Mammary epithelial cell (primary cell): ENCODE measurements at regions of chr16 and their contacts with region 1.

Region 1: GRCh38 chr16:65658349-65658748 is 536.5 kb upstream of the CDH11 start:
- DNase-seq: peak; percentile 95
- H3K4me3 ChIP-seq: no peak overlapping the region
- H3K27ac ChIP-seq: peak overlapping the region; percentile 69
- H3K4me1 ChIP-seq: peaks cover 38% of the 10 kb centered on the region
- H3K27me3 ChIP-seq: no peaks in the 10 kb centered on the region
- CTCF ChIP-seq: no peak

Region 2: DNA sequence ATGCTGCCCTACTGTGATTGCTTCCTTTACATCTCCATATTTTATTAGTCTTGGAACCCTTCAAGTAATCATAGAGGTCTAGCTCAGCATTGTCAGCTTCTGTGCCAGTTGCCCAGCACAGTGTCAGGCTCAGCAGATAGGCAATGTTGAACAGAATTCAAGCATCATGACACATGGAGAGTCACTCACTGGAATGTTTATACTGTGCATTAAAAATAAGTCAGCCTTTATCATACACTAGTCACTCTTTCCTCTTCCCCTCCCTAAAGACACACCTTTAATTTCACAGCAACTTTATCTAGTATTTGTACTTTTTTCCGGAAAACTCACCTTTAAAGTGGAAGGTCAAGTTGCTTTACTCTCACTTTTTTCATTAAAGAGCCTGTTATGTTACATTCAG is 282.7 kb before region 1 on chr16:
- CTCF ChIA-PET with region 1: no interaction called
- dilution Hi-C with region 1: no loop called
- in situ Hi-C with region 1: no loop called
- intact Hi-C with region 1: loop called (anchors 2 kb)
- DNase-seq: peak; percentile 59
- H3K4me3 ChIP-seq: no peak overlapping the region
- H3K27ac ChIP-seq: no peak overlapping the region
- H3K4me1 ChIP-seq: peaks cover 26% of the 10 kb centered on the region
- H3K27me3 ChIP-seq: no peaks in the 10 kb centered on the region
- CTCF ChIP-seq: no peak

Region 3: GRCh38 chr16:65769055-65769465 is 110.7 kb after region 1 on chr16:
- CTCF ChIA-PET with region 1: no interaction called
- dilution Hi-C with region 1: no loop called
- in situ Hi-C with region 1: no loop called
- intact Hi-C with region 1: no loop called
- DNase-seq: peak; percentile 50
- H3K4me3 ChIP-seq: no peak overlapping the region
- H3K27ac ChIP-seq: no peak overlapping the region
- H3K4me1 ChIP-seq: peaks cover 7% of the 10 kb centered on the region
- H3K27me3 ChIP-seq: no peaks in the 10 kb centered on the region
- CTCF ChIP-seq: no peak

Region 4: GRCh38 chr16:65884018-65884417 is 225.7 kb after region 1 on chr16:
- CTCF ChIA-PET with region 1: no interaction called
- dilution Hi-C with region 1: no loop called
- in situ Hi-C with region 1: no loop called
- intact Hi-C with region 1: loop called (anchors 2 kb)
- DNase-seq: peak; percentile 90
- H3K4me3 ChIP-seq: no peak overlapping the region
- H3K27ac ChIP-seq: peak overlapping the region; percentile 98
- H3K4me1 ChIP-seq: peaks cover 29% of the 10 kb centered on the region
- H3K27me3 ChIP-seq: no peaks in the 10 kb centered on the region
- CTCF ChIP-seq: no peak